ENCODE measurements at regions of chr10 and their contacts with region 1.

Region 1: GRCh38 chr10:24202181-24202570 is 6.8 kb upstream of the KIAA1217 start:
- DNase-seq: peak; percentile 86 to 88
- H3K4me3 ChIP-seq: no peak overlapping the region
- H3K27ac ChIP-seq: peak overlapping the region; percentile 95 to 98 (median 96)
- H3K4me1 ChIP-seq: peaks cover 29 to 63% of the 10 kb centered on the region in 2 donors
- H3K27me3 ChIP-seq: no peaks in the 10 kb centered on the region
- CTCF ChIP-seq: no peak
- POLR2A ChIP-seq: peak in 1 of 2 donors; percentile 53

Region 2: GRCh38 chr10:24357344-24358004 is 155.3 kb after region 1 on chr10:
- intact Hi-C with region 1: loop called (anchors 5 kb)
- DNase-seq: peak; percentile 83 to 90
- H3K4me3 ChIP-seq: no peak overlapping the region
- H3K27ac ChIP-seq: peak overlapping the region; percentile 50 to 77 (median 58)
- H3K4me1 ChIP-seq: peaks cover 14 to 36% of the 10 kb centered on the region in 2 donors
- H3K27me3 ChIP-seq: no peaks in the 10 kb centered on the region
- CTCF ChIP-seq: no peak
- POLR2A ChIP-seq: no peak

Region 3: DNA sequence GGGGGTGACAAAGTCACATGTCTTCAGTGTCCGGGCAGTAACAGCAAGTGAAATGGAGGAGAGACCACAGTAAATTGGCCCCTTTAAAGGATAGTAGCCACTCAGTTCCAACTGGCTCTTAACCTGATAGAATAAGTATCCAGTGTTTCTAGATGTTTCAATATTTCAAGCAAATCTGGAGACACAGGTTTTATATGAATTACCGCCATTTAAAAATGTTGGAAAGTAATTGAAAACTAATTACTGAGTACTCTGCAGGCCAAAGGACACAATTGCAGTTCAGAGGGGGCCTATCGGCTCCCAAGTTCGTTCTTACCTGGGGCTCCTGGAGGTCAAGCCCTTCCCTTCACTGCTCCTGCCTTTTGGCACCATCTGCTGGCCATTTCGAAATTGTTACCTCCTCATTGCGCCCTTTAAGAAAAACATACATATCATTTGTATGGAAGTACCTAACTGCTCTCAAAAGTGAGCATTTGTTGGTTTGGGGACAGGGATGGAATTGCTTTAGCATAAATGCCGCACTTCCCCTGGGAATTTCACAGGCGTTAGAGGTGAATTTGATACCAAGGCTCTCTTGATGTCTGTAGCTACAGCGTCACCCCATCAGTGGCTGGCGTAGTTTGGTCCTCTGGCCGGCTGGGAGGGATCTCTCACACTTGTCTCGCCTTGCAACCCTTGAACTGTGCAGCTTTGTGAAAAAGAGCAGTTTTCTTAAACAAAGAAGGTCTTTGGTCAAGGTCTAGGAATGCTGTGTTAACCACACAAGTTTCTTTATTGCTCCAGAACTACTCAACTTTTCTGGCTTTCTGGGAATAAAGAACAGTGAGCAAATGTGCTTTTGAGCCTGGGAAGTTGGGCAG is 301.5 kb after region 1 on chr10:
- intact Hi-C with region 1: loop called (anchors 10 kb)
- DNase-seq: peak; percentile 56 to 57
- H3K4me3 ChIP-seq: no peak overlapping the region
- H3K27ac ChIP-seq: peak overlapping the region in 2 of 3 donors; percentile 26 to 49
- H3K4me1 ChIP-seq: peaks cover 8 to 9% of the 10 kb centered on the region in 2 donors
- H3K27me3 ChIP-seq: no peaks in the 10 kb centered on the region
- CTCF ChIP-seq: peak; percentile 11 to 74 (median 48)
- POLR2A ChIP-seq: no peak

Measured in thyroid gland (tissue), 4 donors.